ENCODE measurements at regions of chr2 and their contacts with region 1.

Region 1: GRCh38 chr2:70340921-70341765 is 39.3 kb upstream of the FAM136A start:
- DNase-seq: peak; percentile 58 to 81 (median 76)
- ATAC-seq: peak; percentile 92
- H3K4me3 ChIP-seq: no peak overlapping the region
- H3K27ac ChIP-seq: no peak overlapping the region
- H3K4me1 ChIP-seq: no peaks in the 10 kb centered on the region
- H3K27me3 ChIP-seq: peaks cover 0 to 11% of the 10 kb centered on the region in 2 experiments; a peak in 2 of 5 replicates
- CTCF ChIP-seq: peak; percentile 81 to 89 (median 89)
- EP300 ChIP-seq: no peak
- POLR2A ChIP-seq: no peak
- RAD21 ChIP-seq: peak; percentile 78 to 94

Region 2: DNA sequence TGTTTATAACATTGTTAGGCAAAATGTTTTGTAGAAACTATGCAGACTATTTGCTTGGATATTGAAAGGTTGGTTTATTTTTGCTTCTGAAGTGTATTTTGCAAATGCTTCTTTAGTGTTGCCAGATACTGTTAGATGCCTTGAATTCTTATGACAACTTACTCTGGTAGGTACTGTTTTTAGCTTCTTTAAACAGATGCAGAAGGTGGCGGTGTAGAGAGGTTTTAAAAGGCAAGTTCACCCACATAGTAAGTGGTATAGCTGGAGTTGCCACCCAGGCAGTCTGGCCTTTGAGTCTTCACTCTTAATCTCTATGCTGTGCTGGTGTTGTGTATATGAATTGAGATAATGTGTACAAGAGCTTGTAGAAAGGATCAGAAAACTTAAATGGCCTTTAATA is 79.6 kb before region 1 on chr2:
- CTCF ChIA-PET with region 1: no interaction called
- POLR2A ChIA-PET with region 1: no interaction called
- in situ Hi-C with region 1: no loop called
- intact Hi-C with region 1: no loop called
- DNase-seq: no peak
- ATAC-seq: no peak
- H3K4me3 ChIP-seq: no peak overlapping the region
- H3K27ac ChIP-seq: no peak overlapping the region
- H3K4me1 ChIP-seq: peaks cover 11 to 14% of the 10 kb centered on the region in 2 experiments; a peak in 4 of 5 replicates
- H3K27me3 ChIP-seq: no peaks in the 10 kb centered on the region
- CTCF ChIP-seq: no peak; a peak in 1 of 6 replicates
- EP300 ChIP-seq: no peak
- POLR2A ChIP-seq: no peak
- RAD21 ChIP-seq: no peak

Region 3: DNA sequence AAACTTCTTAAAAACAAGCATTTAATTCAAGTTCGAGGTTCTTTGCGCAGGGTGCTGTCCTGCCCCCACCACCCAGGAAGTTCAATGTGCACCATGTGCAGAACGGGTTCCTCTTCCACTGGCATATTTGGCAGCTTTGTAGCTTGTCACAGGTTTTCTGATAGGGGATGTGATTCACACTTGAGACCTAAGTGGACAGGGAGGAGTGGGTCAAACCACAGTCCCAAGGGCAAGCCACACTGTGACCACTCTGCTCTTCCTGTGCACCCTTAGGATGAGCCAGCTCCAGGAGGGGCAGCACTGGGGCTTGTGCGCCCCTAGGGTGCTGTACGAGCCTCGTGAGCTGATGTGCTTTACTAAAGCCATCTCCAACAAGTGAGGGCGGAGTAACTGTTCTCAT is 130.0 kb after region 1 on chr2:
- CTCF ChIA-PET with region 1: no interaction called
- POLR2A ChIA-PET with region 1: no interaction called
- in situ Hi-C with region 1: no loop called
- intact Hi-C with region 1: no loop called
- DNase-seq: no peak
- ATAC-seq: no peak
- H3K4me3 ChIP-seq: no peak overlapping the region
- H3K27ac ChIP-seq: no peak overlapping the region
- H3K4me1 ChIP-seq: no peaks in the 10 kb centered on the region
- H3K27me3 ChIP-seq: peaks cover 0 to 32% of the 10 kb centered on the region in 2 experiments; a peak in 3 of 5 replicates
- CTCF ChIP-seq: no peak
- EP300 ChIP-seq: no peak
- POLR2A ChIP-seq: no peak
- RAD21 ChIP-seq: no peak

Region 4: GRCh38 chr2:70616168-70616694 is 275.1 kb after region 1 on chr2:
- CTCF ChIA-PET with region 1: no interaction called
- POLR2A ChIA-PET with region 1: no interaction called
- in situ Hi-C with region 1: no loop called
- intact Hi-C with region 1: loop called (anchors 10 kb)
- DNase-seq: no peak
- ATAC-seq: no peak
- H3K4me3 ChIP-seq: no peak overlapping the region
- H3K27ac ChIP-seq: no peak overlapping the region
- H3K4me1 ChIP-seq: no peaks in the 10 kb centered on the region
- H3K27me3 ChIP-seq: peaks cover 0 to 18% of the 10 kb centered on the region in 2 experiments; a peak in 3 of 5 replicates
- CTCF ChIP-seq: no peak
- EP300 ChIP-seq: no peak
- POLR2A ChIP-seq: no peak
- RAD21 ChIP-seq: no peak

Region 5: DNA sequence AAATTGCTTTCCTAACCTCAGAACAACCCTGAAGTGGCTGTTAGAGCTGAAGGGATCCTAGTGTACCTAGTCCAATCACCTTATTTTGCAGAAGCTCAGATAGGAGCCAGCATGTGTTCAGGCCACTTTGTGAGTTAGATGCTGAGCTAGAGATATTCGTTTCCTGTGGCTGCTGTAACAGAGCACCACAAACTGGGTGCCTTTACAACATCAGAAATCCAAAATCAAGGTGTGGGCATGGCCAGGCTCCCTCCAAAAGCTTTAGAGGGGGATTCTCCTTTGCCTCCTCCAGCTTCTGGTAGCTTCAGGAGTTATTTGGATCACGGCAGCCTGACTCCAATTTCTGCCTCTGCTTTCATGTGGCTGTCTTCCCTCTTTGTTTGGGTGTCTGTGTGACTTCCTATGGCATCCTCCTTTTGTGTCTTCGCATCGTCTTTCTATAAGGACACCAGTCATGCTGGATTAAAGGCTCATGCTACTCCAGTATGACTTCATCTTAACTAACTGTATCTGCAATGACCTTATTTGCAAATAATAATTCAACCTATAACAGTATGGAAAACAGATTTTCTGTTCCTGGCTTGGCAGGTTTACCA is 298.8 kb after region 1 on chr2:
- CTCF ChIA-PET with region 1: interaction called, 4 read pairs
- POLR2A ChIA-PET with region 1: interaction called, 3 read pairs
- in situ Hi-C with region 1: loop called (anchors 5 kb)
- intact Hi-C with region 1: loop called (anchors 2 kb)
- DNase-seq: no peak
- ATAC-seq: no peak
- H3K4me3 ChIP-seq: no peak overlapping the region
- H3K27ac ChIP-seq: no peak overlapping the region
- H3K4me1 ChIP-seq: no peaks in the 10 kb centered on the region
- H3K27me3 ChIP-seq: peaks cover 4 to 12% of the 10 kb centered on the region in 2 experiments; a peak in 2 of 5 replicates
- CTCF ChIP-seq: no peak
- EP300 ChIP-seq: no peak
- POLR2A ChIP-seq: no peak
- RAD21 ChIP-seq: no peak

Region 6: DNA sequence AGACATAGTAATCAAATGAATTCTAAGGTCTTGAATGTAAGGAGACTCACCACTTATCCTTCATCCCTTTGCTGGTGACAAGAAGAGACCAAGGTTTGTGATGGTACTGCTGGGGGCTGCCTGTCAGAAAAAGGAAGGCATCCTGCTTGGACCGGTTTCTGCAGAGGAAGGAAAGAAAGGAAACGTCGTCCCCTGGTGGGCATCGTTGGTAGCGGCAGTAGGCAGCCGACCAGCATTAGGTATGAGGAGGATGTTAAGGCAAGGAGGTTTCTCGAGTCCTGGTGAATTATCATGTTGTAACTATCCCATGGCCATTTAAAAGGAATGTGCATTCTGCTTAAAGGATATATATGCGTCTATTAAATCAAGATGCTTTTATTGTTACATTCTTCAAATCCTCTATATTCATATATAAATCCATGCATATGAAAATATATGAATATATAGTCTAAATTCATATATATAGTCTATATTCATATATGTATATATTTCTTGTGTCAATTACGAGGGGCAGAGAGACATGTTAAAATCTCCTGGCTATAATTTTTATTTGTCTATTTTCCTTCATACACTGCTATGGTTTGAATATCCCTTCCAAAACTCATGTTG is 306.8 kb after region 1 on chr2:
- CTCF ChIA-PET with region 1: interaction called, 14 read pairs
- POLR2A ChIA-PET with region 1: interaction called, 3 read pairs
- in situ Hi-C with region 1: no loop called
- intact Hi-C with region 1: loop called (anchors 2 kb)
- DNase-seq: peak; percentile 61 to 77 (median 70)
- ATAC-seq: peak; percentile 91
- H3K4me3 ChIP-seq: no peak overlapping the region
- H3K27ac ChIP-seq: no peak overlapping the region
- H3K4me1 ChIP-seq: no peaks in the 10 kb centered on the region
- H3K27me3 ChIP-seq: no peaks in the 10 kb centered on the region; a peak in 1 of 5 replicates
- CTCF ChIP-seq: peak; percentile 91 to 97 (median 94)
- EP300 ChIP-seq: no peak
- POLR2A ChIP-seq: no peak
- RAD21 ChIP-seq: peak; percentile 82 to 92

Region 7: GRCh38 chr2:70686577-70687460 is 345.7 kb after region 1 on chr2:
- CTCF ChIA-PET with region 1: no interaction called
- POLR2A ChIA-PET with region 1: no interaction called
- in situ Hi-C with region 1: no loop called
- intact Hi-C with region 1: no loop called
- DNase-seq: peak; percentile 94 to 96 (median 94)
- ATAC-seq: peak; percentile 99
- H3K4me3 ChIP-seq: no peak overlapping the region
- H3K27ac ChIP-seq: peak overlapping the region; percentile 95
- H3K4me1 ChIP-seq: peaks cover 29 to 34% of the 10 kb centered on the region in 2 experiments
- H3K27me3 ChIP-seq: no peaks in the 10 kb centered on the region
- CTCF ChIP-seq: peak; percentile 93 to 97 (median 96)
- EP300 ChIP-seq: peak; percentile 98
- POLR2A ChIP-seq: peak; percentile 39; the same call in 1 of the 2 replicates
- RAD21 ChIP-seq: peak; percentile 80 to 84

Region 8: DNA sequence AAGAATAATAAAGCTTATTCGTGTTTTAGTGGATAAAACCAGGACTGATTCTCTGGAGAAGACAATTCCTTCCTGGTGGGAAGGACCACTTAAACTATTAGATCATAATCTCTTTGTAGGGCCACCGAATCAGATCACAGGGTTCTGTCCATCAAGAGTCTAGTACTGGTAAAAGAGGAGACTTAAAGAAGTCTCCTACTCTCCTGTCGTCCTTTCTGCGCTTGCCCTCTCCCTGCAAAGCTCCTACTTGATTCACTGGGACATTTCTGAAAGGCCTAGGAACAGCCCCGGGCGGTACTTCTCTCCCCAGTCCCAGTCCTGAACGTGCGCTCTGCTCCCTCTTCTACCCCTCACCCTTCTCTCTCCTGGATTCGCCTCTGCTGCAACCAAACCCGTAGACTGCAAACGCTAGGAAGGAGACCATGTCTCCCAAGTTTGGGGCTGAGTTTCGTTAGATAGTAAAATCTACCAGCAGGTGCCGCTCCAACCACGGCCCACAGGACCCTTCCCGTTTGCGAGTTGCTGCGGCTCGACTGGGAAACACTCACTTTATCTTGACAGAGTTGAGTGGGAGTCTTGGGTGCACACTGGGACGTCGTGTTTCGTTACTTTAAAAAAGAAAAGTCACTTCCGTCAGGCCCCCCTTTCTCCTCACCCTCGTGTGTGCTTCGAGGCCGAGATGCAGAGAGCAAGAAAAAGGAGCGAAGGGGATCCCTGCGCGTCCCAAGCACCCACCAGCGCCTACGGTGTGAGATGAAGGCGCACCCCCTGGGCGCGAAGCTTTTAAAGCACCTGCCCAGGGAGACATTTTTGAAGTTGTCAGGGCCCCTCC is 448.4 kb after region 1 on chr2:
- CTCF ChIA-PET with region 1: interaction called, 3 read pairs
- POLR2A ChIA-PET with region 1: no interaction called
- in situ Hi-C with region 1: no loop called
- intact Hi-C with region 1: loop called (anchors 10 kb)
- DNase-seq: peak; percentile 52 to 78 (median 62)
- ATAC-seq: peak; percentile 90
- H3K4me3 ChIP-seq: no peak overlapping the region
- H3K27ac ChIP-seq: no peak overlapping the region
- H3K4me1 ChIP-seq: peaks cover 0 to 10% of the 10 kb centered on the region in 2 experiments; a peak in 3 of 5 replicates
- H3K27me3 ChIP-seq: peaks cover 6 to 16% of the 10 kb centered on the region in 2 experiments
- CTCF ChIP-seq: peak; percentile 86 to 87 (median 86)
- EP300 ChIP-seq: no peak
- POLR2A ChIP-seq: no peak
- RAD21 ChIP-seq: peak; percentile 53 to 77

Measured in K562 (cell line).